Left cardiac atrium (tissue), 4 donors: ENCODE measurements at regions of chr14 and their contacts with region 1.

Region 1: DNA sequence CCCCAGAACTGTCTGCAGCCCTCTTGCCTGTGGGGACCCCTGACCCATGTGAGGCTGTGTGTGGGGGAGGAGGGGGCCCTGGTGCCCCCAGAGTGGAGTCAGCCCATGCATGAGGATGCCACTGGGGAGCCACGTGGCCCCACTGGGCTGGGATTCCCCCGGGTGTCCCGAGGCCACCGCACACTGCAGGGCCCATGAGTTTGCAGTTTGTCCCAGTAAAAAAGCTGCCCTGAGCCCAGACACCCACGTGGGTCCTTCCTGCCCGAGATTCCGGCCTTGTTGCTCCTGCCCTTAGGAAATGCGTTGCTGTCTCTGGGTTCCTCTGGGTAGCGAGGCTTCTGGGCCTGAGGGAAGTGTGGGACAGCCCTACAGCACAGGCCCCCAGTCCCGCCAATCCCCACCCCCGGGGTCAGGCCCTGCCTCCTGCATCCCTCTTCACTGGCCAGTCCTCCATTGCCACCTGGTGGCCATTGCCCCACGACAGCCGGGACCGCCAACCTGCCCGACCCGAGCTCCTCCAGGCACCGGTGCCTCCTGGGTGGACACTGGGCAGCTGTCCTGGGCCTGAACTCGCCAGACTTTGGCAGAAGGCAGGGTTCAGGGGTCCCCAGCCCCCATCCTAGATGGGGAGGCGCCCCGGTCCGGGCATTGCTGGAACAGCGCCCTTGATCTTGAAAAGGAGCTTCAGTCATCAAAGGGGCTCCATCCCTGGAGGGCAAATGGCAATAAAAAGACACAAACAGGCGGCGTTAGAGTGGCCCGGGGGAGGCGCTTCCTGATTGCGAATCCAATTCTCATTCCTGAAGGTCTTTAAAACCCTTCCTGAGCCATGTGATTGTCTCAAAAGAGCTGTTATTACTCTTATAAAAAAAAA is 15.6 kb upstream of the C14orf180 start:
- DNase-seq: peak; percentile 81
- ATAC-seq: peak; percentile 81 to 86

Region 2: DNA sequence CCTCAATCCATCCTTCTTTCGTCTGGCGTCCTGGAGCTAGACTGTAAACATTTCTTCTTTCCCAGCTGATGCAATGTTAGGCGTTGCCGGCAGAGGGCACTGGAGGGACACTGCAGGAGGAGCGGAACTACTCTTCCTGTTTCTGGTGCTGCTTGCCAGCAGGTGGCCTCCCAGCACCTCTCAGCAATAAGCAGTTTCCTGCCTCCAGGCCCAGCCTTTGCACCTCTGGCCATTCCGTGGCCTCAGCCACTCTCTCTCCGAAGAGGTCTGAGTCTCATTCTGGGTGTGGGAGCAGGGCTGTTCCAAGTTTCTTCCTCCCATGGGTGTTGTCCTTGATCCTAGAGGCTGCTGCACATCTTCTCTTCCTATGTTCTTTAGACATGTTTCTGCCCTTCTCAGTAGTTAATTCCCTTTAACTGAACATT is 485.9 kb before region 1 on chr14:
- intact Hi-C with region 1: loop called in 1 of 2 experiments (anchors 10 kb)
- DNase-seq: peak; percentile 88
- ATAC-seq: peak; percentile 89 to 91

Region 3: DNA sequence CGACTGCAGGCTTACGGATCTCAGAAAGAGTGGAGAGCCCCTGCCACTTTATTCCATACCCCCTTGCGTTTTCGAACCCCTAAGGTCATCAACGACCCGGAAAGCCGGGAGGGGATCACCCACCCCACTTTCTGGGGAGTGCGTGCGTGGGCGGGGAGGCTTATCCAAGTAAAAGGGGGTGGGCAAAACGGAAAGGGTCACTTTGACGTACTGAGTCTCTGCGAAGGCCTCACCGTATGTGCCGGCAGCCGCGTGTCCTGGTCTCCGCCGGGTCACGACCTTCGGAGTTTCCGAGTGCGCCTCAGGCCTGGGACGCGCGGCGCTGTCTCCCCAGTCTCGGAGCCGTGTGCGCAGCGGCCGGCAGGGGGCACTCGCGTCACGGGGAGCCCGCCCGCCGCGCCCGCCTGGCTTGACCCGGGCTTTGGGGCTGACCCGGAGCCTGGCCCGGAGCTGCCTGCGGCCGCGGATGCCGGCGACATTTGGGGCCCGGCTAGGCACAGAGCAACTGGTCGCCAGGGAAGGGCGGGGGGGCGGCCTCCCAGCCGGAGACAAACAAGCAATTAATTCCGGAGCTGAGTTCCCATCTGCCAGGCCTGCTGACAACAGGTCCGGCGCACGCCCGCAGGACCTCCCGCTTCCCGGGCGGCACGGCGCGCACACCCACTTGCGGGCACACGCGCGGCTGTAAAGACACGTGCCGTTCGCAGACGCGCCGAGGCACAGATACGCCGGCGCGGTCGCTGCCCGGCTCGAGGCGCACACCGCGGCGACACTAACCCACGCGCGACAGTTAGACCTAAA is 426.5 kb before region 1 on chr14:
- intact Hi-C with region 1: loop called (anchors 2 to 5 kb)
- DNase-seq: peak; percentile 77
- ATAC-seq: peak; percentile 86 to 88

Region 4: GRCh38 chr14:104514156-104514848 is 49.7 kb before region 1 on chr14:
- intact Hi-C with region 1: no loop called
- DNase-seq: no peak
- ATAC-seq: peak in 1 of 2 donors; percentile 21